Dorsolateral prefrontal cortex (tissue), 120 donors: ENCODE measurements at regions of chr20 and their contacts with region 1.

Region 1: DNA sequence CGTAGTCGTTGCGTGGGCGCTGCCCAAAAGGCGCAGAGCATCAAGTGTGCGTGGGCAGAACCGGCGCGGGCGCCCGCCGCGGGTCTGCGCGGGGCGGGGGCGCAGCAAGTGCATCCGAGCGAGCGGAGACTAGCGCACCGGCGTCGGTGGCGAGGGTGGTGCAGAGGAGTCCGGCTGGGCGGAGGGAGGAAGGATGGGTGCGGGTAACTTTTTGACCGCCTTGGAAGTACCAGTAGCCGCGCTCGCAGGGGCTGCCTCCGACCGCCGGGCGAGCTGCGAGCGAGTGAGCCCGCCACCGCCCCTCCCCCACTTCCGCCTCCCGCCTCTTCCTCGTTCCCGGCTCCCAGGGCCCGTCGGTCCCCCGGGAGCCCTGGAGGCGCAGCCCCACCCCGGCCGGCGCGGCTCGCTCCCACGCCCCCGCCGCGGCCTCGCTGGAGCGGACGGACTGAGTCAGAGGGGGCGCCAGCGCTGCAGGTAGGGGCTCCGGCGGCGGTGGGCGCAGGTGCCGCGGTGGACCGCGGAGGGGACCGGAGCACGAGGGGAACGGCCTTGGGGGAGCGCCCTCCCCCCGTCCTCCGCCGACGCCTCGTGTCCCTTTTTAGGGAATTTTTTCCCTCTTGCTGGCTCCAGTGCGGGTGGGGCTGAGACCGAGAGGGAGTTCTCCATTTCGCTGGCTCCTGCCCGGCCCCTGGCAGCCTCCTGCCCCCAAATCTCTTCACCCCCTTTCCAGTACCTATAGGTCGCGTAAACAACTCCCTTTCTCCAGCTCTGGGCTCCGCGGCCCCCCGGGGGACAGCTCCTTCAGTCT is 1.6 kb upstream of the DBNDD2 start:
- DNase-seq: peak in 9 of 10 donors; percentile 43 to 85 (median 68)
- H3K4me3 ChIP-seq: peak overlapping the region; percentile 65 to 97 (median 89)
- H3K27ac ChIP-seq: peak overlapping the region; percentile 89 to 100 (median 99)
- H3K27me3 ChIP-seq: no peaks in the 10 kb centered on the region
- CTCF ChIP-seq: peak in 19 of 56 donors; percentile 4 to 37 (median 21)

Region 2: GRCh38 chr20:45362804-45363610 is 43.5 kb before region 1 on chr20 and contains the start of gene SYS1:
- intact Hi-C with region 1: loop called in 1 of 2 experiments (anchors 2 kb)
- DNase-seq: peak; percentile 96 to 98 (median 96)
- H3K4me3 ChIP-seq: peak within 1 kb of the TSS; percentile 48 to 99 (median 81)
- H3K27ac ChIP-seq: peak within 1 kb of the TSS; percentile 64 to 99 (median 96)
- H3K27me3 ChIP-seq: no peaks in the 10 kb centered on the region
- CTCF ChIP-seq: peak; percentile 85 to 99 (median 95)
- total RNA-seq, gene SYS1: 19.5 to 49.7 (median 29.3) TPM

Region 3: GRCh38 chr20:45373353-45374100 is 32.9 kb before region 1 on chr20:
- intact Hi-C with region 1: loop called in 1 of 2 experiments (anchors 2 kb)
- DNase-seq: peak; percentile 79 to 92 (median 87)
- H3K4me3 ChIP-seq: peak overlapping the region; percentile 34 to 74 (median 59)
- H3K27ac ChIP-seq: peak overlapping the region; percentile 33 to 97 (median 90)
- H3K27me3 ChIP-seq: no peaks in the 10 kb centered on the region
- CTCF ChIP-seq: peak; percentile 71 to 98 (median 92)